ENCODE measurements at regions of chr18 and their contacts with region 1.

Region 1: GRCh38 chr18:961644-962355 is 57.1 kb downstream of the ADCYAP1 start:
- DNase-seq: no peak
- H3K4me3 ChIP-seq: peak overlapping the region; percentile 45 to 64
- H3K27ac ChIP-seq: peak overlapping the region; percentile 37 to 62
- H3K4me1 ChIP-seq: no peaks in the 10 kb centered on the region
- H3K27me3 ChIP-seq: no peaks in the 10 kb centered on the region
- CTCF ChIP-seq: peak; percentile 46 to 96 (median 87)

Region 2: GRCh38 chr18:839224-840022 is 122.4 kb before region 1 on chr18:
- intact Hi-C with region 1: no loop called
- DNase-seq: peak; percentile 19 to 92
- H3K4me3 ChIP-seq: no peak overlapping the region
- H3K27ac ChIP-seq: no peak overlapping the region
- H3K4me1 ChIP-seq: peaks cover 0 to 5% of the 10 kb centered on the region in 2 donors
- H3K27me3 ChIP-seq: no peaks in the 10 kb centered on the region
- CTCF ChIP-seq: peak; percentile 71 to 98 (median 98)

Region 3: DNA sequence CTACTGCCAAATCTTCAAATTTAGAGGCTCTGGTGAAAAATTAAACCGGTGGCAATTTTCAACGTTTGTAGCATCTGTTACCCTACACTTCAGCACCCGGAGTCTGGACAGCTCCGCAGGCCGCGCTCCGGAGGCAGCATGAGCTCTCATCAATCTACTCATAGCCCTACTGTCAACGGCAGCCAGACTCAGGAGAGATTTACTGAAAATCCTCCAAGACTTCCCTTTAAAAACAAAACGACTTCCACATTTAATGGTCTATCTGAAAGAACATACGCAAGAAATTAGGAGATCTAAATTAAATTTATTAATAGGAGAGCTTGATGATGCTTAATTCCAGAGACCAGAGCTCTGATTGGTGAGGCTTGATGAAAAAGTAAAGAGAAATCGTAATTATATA is 58.1 kb before region 1 on chr18:
- intact Hi-C with region 1: loop called (anchors 5 kb)
- DNase-seq: no peak
- H3K4me3 ChIP-seq: no peak overlapping the region
- H3K27ac ChIP-seq: no peak overlapping the region
- H3K4me1 ChIP-seq: peaks cover 22 to 27% of the 10 kb centered on the region in 2 donors
- H3K27me3 ChIP-seq: peaks cover 42% of the 10 kb centered on the region
- CTCF ChIP-seq: no peak